Pancreas (tissue), 10 donors: ENCODE measurements at regions of chr1 and their contacts with region 1.

Region 1: DNA sequence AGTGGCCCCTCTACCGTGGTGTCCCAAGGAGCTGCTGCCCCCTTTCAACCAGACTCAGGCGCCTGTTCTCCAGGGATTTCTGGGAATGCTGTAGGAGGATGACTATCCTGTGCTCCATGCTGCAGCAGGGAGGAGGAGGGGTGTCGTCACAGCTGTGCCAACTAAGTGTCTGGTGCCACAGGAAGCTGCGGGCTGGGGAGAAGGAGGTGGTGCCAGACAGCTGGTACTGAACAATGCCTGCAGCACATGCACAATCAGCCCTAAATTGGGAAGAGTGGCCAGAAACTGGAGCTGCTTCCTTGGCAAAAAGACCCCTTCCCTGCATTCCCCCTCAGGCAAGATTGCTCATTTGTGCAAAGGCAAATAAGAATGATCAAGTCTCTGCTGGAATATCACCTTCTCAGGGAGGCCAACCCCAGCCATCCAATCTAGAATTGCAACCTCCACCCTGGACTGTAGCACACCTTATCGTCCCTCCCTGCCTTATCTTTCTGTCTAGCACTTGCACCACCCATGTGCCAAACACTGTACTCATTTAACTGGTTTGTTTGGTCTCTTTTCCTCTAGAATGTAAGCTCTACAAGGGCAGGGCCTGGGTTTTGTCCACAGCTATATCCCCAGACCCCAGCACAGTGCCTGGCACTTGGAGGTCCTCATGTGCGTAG is 33.3 kb downstream of the LAMB3 start:
- DNase-seq: peak in 1 of 6 donors; percentile 44
- ATAC-seq: peak in 1 of 4 donors; percentile 39
- H3K4me3 ChIP-seq: no peak overlapping the region
- H3K27ac ChIP-seq: no peak overlapping the region
- H3K4me1 ChIP-seq: no peaks in the 10 kb centered on the region
- H3K27me3 ChIP-seq: no peaks in the 10 kb centered on the region
- CTCF ChIP-seq: no peak

Region 2: DNA sequence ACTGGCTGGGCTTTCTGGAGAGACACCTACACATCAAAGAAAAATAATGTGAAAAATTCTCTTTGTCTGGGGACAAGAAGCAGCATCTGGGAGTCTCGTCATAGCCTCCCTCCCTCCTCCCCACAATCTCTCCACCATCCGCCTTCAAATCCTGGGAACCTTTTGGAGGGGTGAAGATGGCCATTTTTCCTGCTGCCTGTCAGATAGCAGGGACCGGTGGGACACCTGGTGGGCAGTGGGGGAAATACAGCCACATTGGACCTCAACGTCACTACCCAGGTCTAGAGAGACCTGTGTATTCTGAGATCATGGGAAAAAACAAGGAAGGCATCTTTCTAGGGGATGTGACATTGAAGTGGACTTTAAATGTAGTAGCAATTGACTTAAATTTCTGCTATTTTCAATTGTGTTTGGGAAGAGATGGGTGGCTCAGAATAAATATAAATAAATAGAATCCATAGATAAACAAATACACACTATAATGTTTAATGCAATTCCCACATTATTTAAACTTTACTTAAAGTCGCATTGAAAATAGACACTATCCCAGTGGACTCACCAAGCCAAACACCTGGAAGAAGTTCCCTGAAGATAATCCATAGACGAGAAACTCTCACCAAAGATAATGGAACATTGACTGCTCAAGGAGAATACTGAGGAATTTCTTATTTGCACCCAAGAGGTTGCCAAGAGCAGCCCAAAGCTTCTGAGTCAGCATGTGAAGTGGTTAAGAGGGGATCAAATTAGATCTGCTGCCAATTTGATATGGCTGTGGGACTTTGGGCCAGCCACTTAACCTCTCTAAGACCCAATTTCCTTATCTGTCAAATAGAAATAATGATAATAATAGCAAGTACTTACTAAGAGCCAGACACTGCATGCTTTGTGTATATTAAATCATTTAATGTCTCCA is 183.0 kb before region 1 on chr1:
- intact Hi-C with region 1: loop called in 1 of 3 experiments (anchors 5 kb)
- DNase-seq: peak; percentile 29 to 85 (median 54)
- ATAC-seq: peak; percentile 68 to 90 (median 88)
- H3K4me3 ChIP-seq: no peak overlapping the region
- H3K27ac ChIP-seq: no peak overlapping the region
- H3K4me1 ChIP-seq: no peaks in the 10 kb centered on the region
- H3K27me3 ChIP-seq: no peaks in the 10 kb centered on the region
- CTCF ChIP-seq: peak in 3 of 4 donors; percentile 25 to 72 (median 65)

Region 3: GRCh38 chr1:209747580-209748262 is 128.8 kb after region 1 on chr1:
- intact Hi-C with region 1: no loop called
- DNase-seq: peak; percentile 95 to 99 (median 97)
- ATAC-seq: peak; percentile 99 to 100 (median 99)
- H3K4me3 ChIP-seq: peak overlapping the region in 1 of 4 donors; percentile 15
- H3K27ac ChIP-seq: peak overlapping the region in 2 of 4 donors; percentile 4 to 20
- H3K4me1 ChIP-seq: peaks cover 0 to 9% (median 0%) of the 10 kb centered on the region in 3 donors
- H3K27me3 ChIP-seq: no peaks in the 10 kb centered on the region
- CTCF ChIP-seq: peak; percentile 76 to 93 (median 88)